Endothelial cell of umbilical vein (primary cell): ENCODE measurements at regions of chr2 and their contacts with region 1.

Region 1: GRCh38 chr2:102301867-102302362 is 9.4 kb upstream of the IL1RL1 start:
- DNase-seq: peak; percentile 51
- H3K4me3 ChIP-seq: no peak overlapping the region
- H3K27ac ChIP-seq: peak overlapping the region; percentile 2
- H3K4me1 ChIP-seq: peaks cover 38% of the 10 kb centered on the region
- H3K27me3 ChIP-seq: no peaks in the 10 kb centered on the region
- CTCF ChIP-seq: peak; percentile 40 to 41
- POLR2A ChIP-seq: no peak

Region 2: DNA sequence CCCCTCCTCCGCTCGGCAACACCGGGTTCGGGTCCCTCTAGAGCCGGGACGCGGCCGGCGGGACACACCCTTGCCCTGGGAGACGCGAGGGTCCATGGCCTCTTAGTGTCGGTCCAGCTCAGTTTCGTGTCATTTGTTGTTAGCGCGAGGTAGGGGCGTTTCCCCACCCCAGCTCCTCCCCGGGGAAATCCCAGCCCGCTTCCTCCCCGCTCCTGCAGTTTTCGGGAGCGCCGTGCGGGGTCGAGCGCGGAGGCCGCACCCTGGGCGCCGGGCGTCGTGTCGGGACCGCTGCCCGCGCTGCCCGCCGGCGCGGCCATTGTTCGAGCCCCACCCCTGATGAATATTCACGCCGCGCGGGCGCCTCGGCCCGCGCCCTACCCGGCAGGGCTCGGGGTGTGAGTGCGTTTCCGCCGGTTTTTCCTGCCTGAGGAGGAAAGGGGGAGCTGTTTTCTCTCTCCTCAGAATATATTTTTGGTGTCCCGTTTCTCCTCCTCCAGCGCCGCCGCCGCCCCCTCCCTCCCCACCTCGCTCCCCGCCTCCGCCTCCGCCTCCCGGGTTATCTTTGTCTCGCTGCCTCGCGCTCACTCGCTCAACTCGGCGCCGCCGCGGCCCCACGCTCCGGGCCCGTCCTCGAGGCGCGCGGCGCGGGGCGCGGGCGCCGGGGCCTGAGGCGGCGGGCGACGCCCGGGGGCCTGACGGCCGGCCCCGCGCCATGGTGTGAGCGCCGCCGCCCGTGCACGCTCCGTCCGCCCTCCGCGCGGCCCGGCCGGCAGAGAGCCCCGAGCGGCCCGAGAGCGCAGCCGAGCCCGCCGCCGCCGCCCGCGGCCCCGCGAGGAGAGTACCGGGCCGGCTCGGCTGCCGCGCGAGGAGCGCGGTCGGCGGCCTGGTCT is 604.5 kb before region 1 on chr2 and contains the start of gene MAP4K4:
- CTCF ChIA-PET with region 1: no interaction called
- POLR2A ChIA-PET with region 1: no interaction called
- dilution Hi-C with region 1: no loop called
- intact Hi-C with region 1: loop called (anchors 5 kb)
- DNase-seq: peak; percentile 67
- H3K4me3 ChIP-seq: peak within 1 kb of the TSS; percentile 55 to 98 (median 96)
- H3K27ac ChIP-seq: peak within 1 kb of the TSS; percentile 85
- H3K4me1 ChIP-seq: peaks cover 20% of the 10 kb centered on the region
- H3K27me3 ChIP-seq: no peaks in the 10 kb centered on the region
- CTCF ChIP-seq: peak in 1 of 2 donors; percentile 11
- POLR2A ChIP-seq: peak; percentile 88
- total RNA-seq, gene MAP4K4: 251 and 269 TPM in 2 replicates

Region 3: GRCh38 chr2:102258386-102259074 is 43.4 kb before region 1 on chr2:
- CTCF ChIA-PET with region 1: interaction called, 3 read pairs
- POLR2A ChIA-PET with region 1: no interaction called
- dilution Hi-C with region 1: no loop called
- intact Hi-C with region 1: loop called (anchors 5 kb)
- DNase-seq: peak; percentile 78
- H3K4me3 ChIP-seq: no peak overlapping the region
- H3K27ac ChIP-seq: peak overlapping the region; percentile 35
- H3K4me1 ChIP-seq: peaks cover 15% of the 10 kb centered on the region
- H3K27me3 ChIP-seq: no peaks in the 10 kb centered on the region
- CTCF ChIP-seq: no peak
- POLR2A ChIP-seq: no peak

Region 4: GRCh38 chr2:102313025-102313424 is 11.1 kb after region 1 on chr2:
- CTCF ChIA-PET with region 1: no interaction called
- POLR2A ChIA-PET with region 1: no interaction called
- dilution Hi-C with region 1: no loop called
- intact Hi-C with region 1: loop called (anchors 1 kb)
- DNase-seq: peak; percentile 67
- H3K4me3 ChIP-seq: no peak overlapping the region
- H3K27ac ChIP-seq: peak overlapping the region; percentile 54
- H3K4me1 ChIP-seq: peaks cover 41% of the 10 kb centered on the region
- H3K27me3 ChIP-seq: no peaks in the 10 kb centered on the region
- CTCF ChIP-seq: no peak
- POLR2A ChIP-seq: no peak

Region 5: GRCh38 chr2:102342891-102343290 is 41.0 kb after region 1 on chr2:
- CTCF ChIA-PET with region 1: interaction called, 11 read pairs
- POLR2A ChIA-PET with region 1: no interaction called
- dilution Hi-C with region 1: no loop called
- intact Hi-C with region 1: no loop called
- DNase-seq: peak; percentile 41
- H3K4me3 ChIP-seq: no peak overlapping the region
- H3K27ac ChIP-seq: no peak overlapping the region
- H3K4me1 ChIP-seq: peaks cover 30% of the 10 kb centered on the region
- H3K27me3 ChIP-seq: no peaks in the 10 kb centered on the region
- CTCF ChIP-seq: peak in 1 of 2 donors; percentile 32
- POLR2A ChIP-seq: peak; percentile 21

Region 6: DNA sequence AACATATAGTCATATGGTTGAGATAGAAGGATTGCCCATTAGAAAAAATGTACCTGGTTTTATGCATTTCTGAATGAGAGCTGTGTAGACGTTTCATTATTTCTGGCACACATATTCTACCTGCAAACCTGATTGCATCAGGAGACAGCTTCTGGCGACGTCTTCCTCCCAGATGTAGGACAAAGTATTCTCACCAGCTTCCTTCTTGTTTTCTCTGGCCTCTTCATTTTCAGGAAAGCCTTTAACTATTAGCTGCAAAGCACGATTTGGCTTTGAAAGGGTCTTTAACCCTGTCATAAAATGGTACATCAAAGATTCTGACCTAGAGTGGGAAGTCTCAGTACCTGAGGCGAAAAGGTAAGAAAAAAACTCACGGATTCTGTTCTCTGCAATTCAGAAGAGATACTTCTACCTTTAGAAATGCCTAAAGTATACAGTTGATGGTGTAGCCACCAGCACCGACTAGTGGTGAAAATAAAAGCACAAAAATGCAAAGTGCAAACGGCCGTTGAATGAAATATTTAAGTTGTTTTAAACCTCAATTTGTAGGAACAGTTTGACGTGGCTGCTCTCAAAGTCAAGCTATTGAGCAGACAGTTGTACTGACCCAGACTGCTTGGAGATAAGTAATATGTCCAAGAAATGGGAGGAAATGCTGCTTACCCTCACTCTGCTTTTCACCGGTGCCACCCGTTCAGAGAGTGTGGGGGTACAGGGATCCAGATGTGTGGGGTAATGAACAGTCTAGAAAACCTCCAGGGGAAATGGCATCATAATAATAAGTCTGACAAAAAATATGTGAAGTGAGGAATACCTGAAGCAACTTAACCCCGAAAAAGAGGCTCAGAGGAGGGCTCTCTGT is 141.3 kb after region 1 on chr2:
- CTCF ChIA-PET with region 1: interaction called, 14 read pairs
- POLR2A ChIA-PET with region 1: no interaction called
- dilution Hi-C with region 1: no loop called
- intact Hi-C with region 1: no loop called
- DNase-seq: peak; percentile 64
- H3K4me3 ChIP-seq: no peak overlapping the region
- H3K27ac ChIP-seq: no peak overlapping the region
- H3K4me1 ChIP-seq: no peaks in the 10 kb centered on the region
- H3K27me3 ChIP-seq: no peaks in the 10 kb centered on the region
- CTCF ChIP-seq: peak; percentile 56 to 62
- POLR2A ChIP-seq: no peak